Adrenal gland (tissue), 19 donors: ENCODE measurements at regions of chr1 and their contacts with region 1.

Region 1: DNA sequence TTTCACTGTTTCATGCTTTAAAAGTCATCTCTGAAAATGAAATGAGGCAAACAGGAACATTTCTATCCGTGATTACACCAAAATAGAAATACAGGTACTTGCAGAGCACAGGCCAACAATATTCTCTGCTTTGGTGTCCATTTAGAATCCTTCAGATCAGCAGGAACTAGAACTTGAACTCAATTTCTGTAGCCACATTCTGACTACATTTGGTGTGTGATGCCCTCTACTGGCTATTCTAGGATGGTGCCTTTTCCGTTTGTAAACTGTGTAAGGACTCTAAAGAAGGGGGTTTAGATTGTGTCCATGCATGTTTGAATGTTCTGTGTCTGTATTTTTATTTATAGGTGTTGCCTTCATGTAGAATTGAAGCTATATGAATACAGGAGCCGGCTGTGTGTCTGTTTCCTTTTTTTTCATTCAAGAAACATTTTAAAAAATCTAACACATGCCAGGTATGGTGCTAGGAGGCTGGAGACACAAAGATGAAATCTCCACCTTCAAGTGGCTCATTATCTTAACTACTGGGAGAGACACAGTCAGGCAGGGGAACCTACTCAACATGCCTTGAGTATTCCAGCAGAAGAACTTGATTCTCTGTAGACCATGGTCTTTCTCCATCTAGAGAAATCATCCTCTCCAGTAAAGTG is 7.6 kb upstream of the ZNF326 start:
- DNase-seq: peak; percentile 40 to 82 (median 65)
- H3K4me3 ChIP-seq: no peak overlapping the region
- H3K27ac ChIP-seq: no peak overlapping the region
- H3K4me1 ChIP-seq: peaks cover 4 to 10% of the 10 kb centered on the region in 2 donors
- H3K27me3 ChIP-seq: no peaks in the 10 kb centered on the region
- CTCF ChIP-seq: peak; percentile 74 to 92 (median 88)
- POLR2A ChIP-seq: no peak

Region 2: GRCh38 chr1:88697503-88697902 is 1289.8 kb before region 1 on chr1:
- intact Hi-C with region 1: no loop called
- DNase-seq: no peak
- H3K4me3 ChIP-seq: no peak overlapping the region
- H3K27ac ChIP-seq: peak overlapping the region in 1 of 5 donors; percentile 62
- H3K4me1 ChIP-seq: peaks cover 27 to 46% of the 10 kb centered on the region in 2 donors
- H3K27me3 ChIP-seq: no peaks in the 10 kb centered on the region
- CTCF ChIP-seq: no peak
- POLR2A ChIP-seq: no peak

Region 3: GRCh38 chr1:89804642-89805237 is 182.6 kb before region 1 on chr1:
- intact Hi-C with region 1: loop called (anchors 5 kb)
- DNase-seq: peak; percentile 82 to 97 (median 90)
- H3K4me3 ChIP-seq: no peak overlapping the region
- H3K27ac ChIP-seq: no peak overlapping the region
- H3K4me1 ChIP-seq: no peaks in the 10 kb centered on the region
- H3K27me3 ChIP-seq: no peaks in the 10 kb centered on the region
- CTCF ChIP-seq: peak; percentile 84 to 96 (median 92)
- POLR2A ChIP-seq: no peak